ENCODE measurements at regions of chr1 and their contacts with region 1.

Region 1: DNA sequence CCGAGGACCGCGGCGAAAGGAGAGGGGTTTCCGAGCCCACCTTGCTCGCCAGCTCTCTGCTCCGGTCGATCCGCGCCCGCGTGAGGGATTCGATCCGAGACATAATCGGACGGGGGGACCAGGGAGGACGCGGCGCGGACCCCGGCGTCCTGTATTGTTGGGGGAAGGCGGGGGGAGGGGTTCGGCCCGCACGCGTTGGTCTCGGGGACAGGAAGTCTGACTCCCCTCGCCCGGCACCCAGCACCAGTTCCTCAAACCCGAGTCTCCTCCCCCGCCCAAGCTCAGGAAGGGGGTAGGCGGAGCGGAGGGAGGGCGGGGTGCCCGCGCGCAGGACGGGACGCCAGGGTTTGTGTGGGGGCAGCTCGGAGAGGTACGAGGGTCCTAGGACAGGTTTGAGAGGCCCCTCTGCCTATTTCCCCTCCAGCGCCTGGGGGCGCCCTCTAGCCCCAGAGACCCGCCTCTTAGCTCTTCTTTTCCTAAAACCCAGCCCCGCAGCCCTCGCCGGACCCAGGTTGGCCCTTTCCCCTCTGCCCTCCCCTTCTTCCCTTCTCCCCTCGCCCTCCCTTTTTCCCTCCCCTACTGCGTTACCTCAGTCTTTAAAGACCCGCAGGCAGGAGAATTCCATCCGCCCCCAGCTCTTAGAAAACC is at the start of gene ARHGEF2:
- DNase-seq: peak; percentile 88
- H3K4me3 Mint-ChIP-seq: peak within 1 kb of the TSS; percentile 96
- H3K27ac Mint-ChIP-seq: peak within 1 kb of the TSS; percentile 96
- H3K4me1 Mint-ChIP-seq: peaks cover 66% of the 10 kb centered on the region
- H3K27me3 Mint-ChIP-seq: no peaks in the 10 kb centered on the region
- total RNA-seq, gene ARHGEF2: 165 to 174 TPM

Region 2: GRCh38 chr1:155946633-155947219 is 31.7 kb before region 1 on chr1:
- CTCF ChIA-PET with region 1: interaction called, 7 read pairs
- POLR2A ChIA-PET with region 1: interaction called, 44 read pairs
- intact Hi-C with region 1: loop called (anchors 1 kb)
- DNase-seq: no peak
- H3K4me3 Mint-ChIP-seq: peak overlapping the region; percentile 65
- H3K27ac Mint-ChIP-seq: peak overlapping the region; percentile 98
- H3K4me1 Mint-ChIP-seq: peaks cover 50% of the 10 kb centered on the region
- H3K27me3 Mint-ChIP-seq: no peaks in the 10 kb centered on the region

Region 3: GRCh38 chr1:155961937-155962336 is 16.5 kb before region 1 on chr1:
- CTCF ChIA-PET with region 1: interaction called, 32 read pairs
- POLR2A ChIA-PET with region 1: interaction called, 10 read pairs
- intact Hi-C with region 1: no loop called
- DNase-seq: peak; percentile 47
- H3K4me3 Mint-ChIP-seq: no peak overlapping the region
- H3K27ac Mint-ChIP-seq: peak overlapping the region; percentile 75
- H3K4me1 Mint-ChIP-seq: peaks cover 14% of the 10 kb centered on the region
- H3K27me3 Mint-ChIP-seq: no peaks in the 10 kb centered on the region